ENCODE measurements at regions of chr5 and their contacts with region 1.

Region 1: GRCh38 chr5:36870399-36871040 is 6.0 kb upstream of the NIPBL start:
- DNase-seq: peak; percentile 62
- H3K4me3 ChIP-seq: no peak overlapping the region
- H3K27ac ChIP-seq: no peak overlapping the region
- H3K4me1 ChIP-seq: no peaks in the 10 kb centered on the region
- H3K27me3 ChIP-seq: no peaks in the 10 kb centered on the region
- CTCF ChIP-seq: peak; percentile 53 to 67

Region 2: DNA sequence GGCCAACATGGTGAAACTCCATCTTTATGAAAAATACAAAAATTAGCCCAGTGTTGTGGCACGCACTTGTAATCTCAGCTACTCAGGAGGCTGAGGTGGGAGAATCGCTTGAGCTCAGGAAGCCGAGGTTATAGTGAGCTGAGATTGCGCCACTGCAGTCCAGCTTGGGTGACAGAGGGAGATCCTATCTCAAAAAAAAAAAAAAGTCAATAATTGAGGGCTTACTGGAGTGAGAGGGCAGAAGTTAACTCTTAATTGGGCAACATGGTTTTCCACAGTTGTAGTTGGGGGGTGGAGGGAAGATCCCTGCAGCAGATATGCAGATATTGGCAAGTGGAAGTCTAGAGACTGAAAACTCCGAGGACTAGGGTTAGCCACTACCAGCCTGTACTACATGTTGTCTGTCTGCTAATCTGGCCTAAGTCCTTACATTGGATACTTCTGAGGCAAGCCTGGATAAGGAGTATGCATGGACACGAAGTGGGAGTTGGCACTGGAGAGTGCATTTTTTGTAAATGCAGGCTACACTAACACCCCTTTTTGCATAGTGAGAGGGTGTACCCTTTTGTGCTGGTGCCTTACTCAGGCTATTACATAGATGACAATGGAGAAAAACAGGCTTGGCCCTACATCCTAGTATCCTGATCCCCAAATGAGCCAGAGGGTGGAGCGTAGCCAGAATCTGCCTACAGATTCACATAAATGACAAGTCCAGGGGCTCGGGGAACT is 83.0 kb before region 1 on chr5:
- CTCF ChIA-PET with region 1: no interaction called
- dilution Hi-C with region 1: no loop called
- in situ Hi-C with region 1: no loop called
- intact Hi-C with region 1: no loop called
- DNase-seq: no peak
- H3K4me3 ChIP-seq: no peak overlapping the region
- H3K27ac ChIP-seq: no peak overlapping the region
- H3K4me1 ChIP-seq: no peaks in the 10 kb centered on the region
- H3K27me3 ChIP-seq: peaks cover 4% of the 10 kb centered on the region
- CTCF ChIP-seq: no peak

Region 3: DNA sequence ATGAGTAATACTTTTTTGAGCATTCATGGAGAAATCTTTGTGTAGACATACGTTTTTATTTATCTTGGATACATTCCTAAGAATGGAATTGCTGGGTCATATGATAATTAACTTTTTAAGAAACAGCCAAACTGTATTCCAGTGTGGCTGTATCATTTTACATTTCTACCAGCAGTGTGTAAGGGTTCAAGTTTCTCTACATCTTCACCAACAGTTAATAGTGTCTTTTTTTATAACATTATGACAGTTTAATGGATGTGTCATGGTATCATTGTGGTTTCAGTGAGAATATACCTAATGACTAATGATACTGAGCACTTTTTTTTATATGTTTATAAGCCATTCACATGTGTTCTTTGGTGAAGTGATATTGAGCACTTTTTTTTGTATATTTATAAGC is 58.4 kb after region 1 on chr5:
- CTCF ChIA-PET with region 1: no interaction called
- dilution Hi-C with region 1: no loop called
- in situ Hi-C with region 1: no loop called
- intact Hi-C with region 1: no loop called
- DNase-seq: peak; percentile 88
- H3K4me3 ChIP-seq: no peak overlapping the region
- H3K27ac ChIP-seq: peak overlapping the region; percentile 77
- H3K4me1 ChIP-seq: peaks cover 6% of the 10 kb centered on the region
- H3K27me3 ChIP-seq: no peaks in the 10 kb centered on the region
- CTCF ChIP-seq: no peak

Region 4: GRCh38 chr5:36965179-36965578 is 94.7 kb after region 1 on chr5:
- CTCF ChIA-PET with region 1: no interaction called
- dilution Hi-C with region 1: no loop called
- in situ Hi-C with region 1: no loop called
- intact Hi-C with region 1: no loop called
- DNase-seq: no peak
- H3K4me3 ChIP-seq: no peak overlapping the region
- H3K27ac ChIP-seq: no peak overlapping the region
- H3K4me1 ChIP-seq: no peaks in the 10 kb centered on the region
- H3K27me3 ChIP-seq: no peaks in the 10 kb centered on the region
- CTCF ChIP-seq: no peak

Region 5: GRCh38 chr5:37005946-37006540 is 135.5 kb after region 1 on chr5:
- CTCF ChIA-PET with region 1: no interaction called
- dilution Hi-C with region 1: no loop called
- in situ Hi-C with region 1: no loop called
- intact Hi-C with region 1: loop called (anchors 1 kb)
- DNase-seq: peak; percentile 20
- H3K4me3 ChIP-seq: no peak overlapping the region
- H3K27ac ChIP-seq: no peak overlapping the region
- H3K4me1 ChIP-seq: no peaks in the 10 kb centered on the region
- H3K27me3 ChIP-seq: no peaks in the 10 kb centered on the region
- CTCF ChIP-seq: peak; percentile 65 to 66